CD8-positive, alpha-beta T cell (primary cell): ENCODE measurements at regions of chr13 and their contacts with region 1.

Region 1: GRCh38 chr13:41061075-41061913 is at the start of gene WBP4:
- DNase-seq: peak; percentile 73 to 94 (median 85)
- ATAC-seq: peak; percentile 58
- H3K4me3 ChIP-seq: peak within 1 kb of the TSS; percentile 86 to 96
- H3K4me3 Mint-ChIP-seq: peak within 1 kb of the TSS; percentile 100
- H3K27ac ChIP-seq: peak within 1 kb of the TSS; percentile 81 to 89
- H3K27ac Mint-ChIP-seq: peak within 1 kb of the TSS; percentile 100
- H3K4me1 ChIP-seq: peaks cover 15% of the 10 kb centered on the region
- H3K4me1 Mint-ChIP-seq: peaks cover 50% of the 10 kb centered on the region
- H3K27me3 ChIP-seq: no peaks in the 10 kb centered on the region
- H3K27me3 Mint-ChIP-seq: no peaks in the 10 kb centered on the region
- CTCF ChIP-seq: no peak
- total RNA-seq, gene WBP4: 6.1 to 7.2 TPM

Region 2: DNA sequence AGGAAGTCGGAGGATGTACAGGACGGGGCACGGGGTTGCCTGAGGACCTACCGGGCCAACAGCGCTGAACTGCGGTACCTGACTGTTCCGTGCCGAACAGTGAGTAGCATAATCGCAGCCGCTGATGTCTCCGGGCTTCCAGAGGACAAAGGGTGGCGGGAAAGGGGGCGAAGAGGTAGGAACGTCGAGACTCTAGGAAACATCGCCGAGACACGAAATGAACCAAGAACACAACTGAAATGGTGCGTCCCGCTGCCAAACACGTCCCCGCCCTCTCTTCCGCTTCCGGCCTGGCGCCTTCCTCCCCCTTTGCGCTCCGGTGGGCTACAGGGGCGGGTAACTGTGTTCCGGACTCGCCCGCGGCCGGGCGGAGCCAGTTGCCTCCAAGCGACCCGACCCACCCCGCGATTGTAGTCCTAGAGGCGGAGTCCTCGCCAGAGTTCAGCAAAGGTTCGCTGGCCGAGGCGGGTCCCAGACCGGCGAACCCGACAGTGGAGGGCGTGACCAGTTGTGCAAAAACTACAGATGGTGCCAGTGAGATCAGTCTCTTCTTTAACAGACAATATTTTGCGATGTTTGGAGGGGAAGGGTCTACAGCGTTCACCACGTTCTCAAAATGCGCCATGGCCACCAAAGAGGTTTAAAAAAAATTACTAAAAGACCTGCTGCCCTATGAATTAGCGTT is 290.2 kb before region 1 on chr13 and contains the start of gene MRPS31:
- CTCF ChIA-PET with region 1: interaction called, 4 read pairs
- POLR2A ChIA-PET with region 1: interaction called, 4 read pairs
- intact Hi-C with region 1: loop called (anchors 1 to 5 kb)
- DNase-seq: peak; percentile 88 to 98 (median 95)
- ATAC-seq: peak; percentile 94
- H3K4me3 ChIP-seq: peak within 1 kb of the TSS; percentile 89 to 92
- H3K4me3 Mint-ChIP-seq: peak within 1 kb of the TSS; percentile 99
- H3K27ac ChIP-seq: peak within 1 kb of the TSS; percentile 74 to 87
- H3K27ac Mint-ChIP-seq: peak within 1 kb of the TSS; percentile 98
- H3K4me1 ChIP-seq: peaks cover 20% of the 10 kb centered on the region
- H3K4me1 Mint-ChIP-seq: peaks cover 41% of the 10 kb centered on the region
- H3K27me3 ChIP-seq: no peaks in the 10 kb centered on the region
- H3K27me3 Mint-ChIP-seq: no peaks in the 10 kb centered on the region
- CTCF ChIP-seq: no peak
- total RNA-seq, gene MRPS31: 7.3 to 7.5 TPM

Region 3: GRCh38 chr13:40982772-40983171 is 78.5 kb before region 1 on chr13:
- CTCF ChIA-PET with region 1: no interaction called
- POLR2A ChIA-PET with region 1: interaction called, 13 read pairs
- intact Hi-C with region 1: loop called in 1 of 2 experiments (anchors 2 kb)
- DNase-seq: peak in 7 of 9 experiments; percentile 35 to 92 (median 59)
- ATAC-seq: peak; percentile 61
- H3K4me3 ChIP-seq: peak overlapping the region; percentile 36 to 52
- H3K4me3 Mint-ChIP-seq: peak overlapping the region; percentile 95
- H3K27ac ChIP-seq: peak overlapping the region; percentile 76 to 89
- H3K27ac Mint-ChIP-seq: peak overlapping the region; percentile 92
- H3K4me1 ChIP-seq: peaks cover 45% of the 10 kb centered on the region
- H3K4me1 Mint-ChIP-seq: peaks cover 61% of the 10 kb centered on the region
- H3K27me3 ChIP-seq: no peaks in the 10 kb centered on the region
- H3K27me3 Mint-ChIP-seq: no peaks in the 10 kb centered on the region
- CTCF ChIP-seq: no peak

Region 4: GRCh38 chr13:41075034-41075433 is 13.7 kb after region 1 on chr13:
- CTCF ChIA-PET with region 1: interaction called, 11 read pairs
- POLR2A ChIA-PET with region 1: interaction called, 5 read pairs
- intact Hi-C with region 1: no loop called
- DNase-seq: peak in 5 of 9 experiments; percentile 23 to 70 (median 49)
- ATAC-seq: peak; percentile 63
- H3K4me3 ChIP-seq: no peak overlapping the region
- H3K4me3 Mint-ChIP-seq: no peak overlapping the region
- H3K27ac ChIP-seq: no peak overlapping the region
- H3K27ac Mint-ChIP-seq: no peak overlapping the region
- H3K4me1 ChIP-seq: no peaks in the 10 kb centered on the region
- H3K4me1 Mint-ChIP-seq: no peaks in the 10 kb centered on the region
- H3K27me3 ChIP-seq: no peaks in the 10 kb centered on the region
- H3K27me3 Mint-ChIP-seq: no peaks in the 10 kb centered on the region
- CTCF ChIP-seq: peak; percentile 72

Region 5: GRCh38 chr13:41263261-41264027 is 202.2 kb after region 1 on chr13 and contains the start of gene MTRF1:
- CTCF ChIA-PET with region 1: no interaction called
- POLR2A ChIA-PET with region 1: interaction called, 7 read pairs
- intact Hi-C with region 1: loop called in 1 of 2 experiments (anchors 1 kb)
- DNase-seq: peak; percentile 65 to 91 (median 82)
- ATAC-seq: peak; percentile 90
- H3K4me3 ChIP-seq: peak within 1 kb of the TSS; percentile 68 to 72
- H3K4me3 Mint-ChIP-seq: peak within 1 kb of the TSS; percentile 99
- H3K27ac ChIP-seq: peak within 1 kb of the TSS; percentile 73 to 84
- H3K27ac Mint-ChIP-seq: peak within 1 kb of the TSS; percentile 99
- H3K4me1 ChIP-seq: peaks cover 26% of the 10 kb centered on the region
- H3K4me1 Mint-ChIP-seq: peaks cover 40% of the 10 kb centered on the region
- H3K27me3 ChIP-seq: no peaks in the 10 kb centered on the region
- H3K27me3 Mint-ChIP-seq: no peaks in the 10 kb centered on the region
- CTCF ChIP-seq: no peak
- total RNA-seq, gene MTRF1: 26.2 to 26.9 TPM

Region 6: GRCh38 chr13:41456768-41457588 is 395.7 kb after region 1 on chr13 and contains the start of gene RGCC:
- CTCF ChIA-PET with region 1: interaction called, 3 read pairs
- POLR2A ChIA-PET with region 1: interaction called, 3 read pairs
- intact Hi-C with region 1: loop called (anchors 1 to 10 kb)
- DNase-seq: peak; percentile 84 to 98 (median 94)
- ATAC-seq: peak; percentile 75
- H3K4me3 ChIP-seq: peak within 1 kb of the TSS; percentile 66 to 87
- H3K4me3 Mint-ChIP-seq: peak within 1 kb of the TSS; percentile 93
- H3K27ac ChIP-seq: peak within 1 kb of the TSS; percentile 85 to 93
- H3K27ac Mint-ChIP-seq: peak within 1 kb of the TSS; percentile 94
- H3K4me1 ChIP-seq: peaks cover 27% of the 10 kb centered on the region
- H3K4me1 Mint-ChIP-seq: peaks cover 40% of the 10 kb centered on the region
- H3K27me3 ChIP-seq: no peaks in the 10 kb centered on the region
- H3K27me3 Mint-ChIP-seq: no peaks in the 10 kb centered on the region
- CTCF ChIP-seq: no peak
- total RNA-seq, gene RGCC: 578 to 581 TPM

Region 7: GRCh38 chr13:42271337-42272114 is 1210.2 kb after region 1 on chr13:
- CTCF ChIA-PET with region 1: no interaction called
- POLR2A ChIA-PET with region 1: interaction called, 3 read pairs
- intact Hi-C with region 1: loop called (anchors 1 to 10 kb)
- DNase-seq: peak; percentile 83 to 99 (median 91)
- ATAC-seq: peak; percentile 86
- H3K4me3 ChIP-seq: peak overlapping the region; percentile 63 to 78
- H3K4me3 Mint-ChIP-seq: peak overlapping the region; percentile 97
- H3K27ac ChIP-seq: peak overlapping the region; percentile 89 to 94
- H3K27ac Mint-ChIP-seq: peak overlapping the region; percentile 96
- H3K4me1 ChIP-seq: peaks cover 31% of the 10 kb centered on the region
- H3K4me1 Mint-ChIP-seq: peaks cover 49% of the 10 kb centered on the region
- H3K27me3 ChIP-seq: no peaks in the 10 kb centered on the region
- H3K27me3 Mint-ChIP-seq: no peaks in the 10 kb centered on the region
- CTCF ChIP-seq: no peak